ENCODE measurements at regions of chr11 and their contacts with region 1.

Region 1: DNA sequence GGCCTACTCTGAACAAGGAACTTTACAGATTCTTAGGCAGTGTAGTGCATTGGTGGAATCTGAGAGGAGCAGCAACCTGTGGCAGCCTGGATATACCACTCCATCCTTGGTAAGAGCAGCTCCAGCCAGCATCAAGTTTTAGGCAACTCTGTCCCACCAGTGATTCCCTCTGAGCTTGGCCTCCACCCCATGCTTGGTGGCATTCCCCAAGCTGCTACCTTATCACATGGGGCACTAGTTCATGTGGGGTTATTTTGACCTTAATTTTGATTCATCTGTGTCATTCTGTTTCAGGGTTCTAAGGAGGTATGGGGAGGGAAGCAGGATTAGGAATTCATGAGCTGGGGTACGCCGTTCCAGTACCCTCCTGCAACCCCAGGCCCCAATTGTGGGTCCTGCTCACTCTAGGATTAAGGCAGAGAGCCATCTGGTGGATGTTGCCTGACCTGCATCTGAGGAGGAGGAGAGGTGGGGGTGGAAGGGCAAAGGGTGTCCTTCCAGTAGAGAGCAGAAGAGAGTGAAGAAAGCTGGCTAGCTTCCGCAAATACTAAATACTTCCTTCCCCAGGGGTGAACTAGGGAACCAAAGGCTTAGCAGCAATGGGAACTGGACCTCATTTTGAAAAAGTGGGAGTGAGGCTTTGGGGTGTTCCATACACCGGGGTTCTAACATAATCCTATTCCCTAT is 10.5 kb downstream of the LRRC51 start:
- DNase-seq: peak; percentile 82
- H3K4me3 Mint-ChIP-seq: no peak overlapping the region
- H3K27ac Mint-ChIP-seq: peak overlapping the region; percentile 38
- H3K4me1 Mint-ChIP-seq: peaks cover 7% of the 10 kb centered on the region
- H3K27me3 Mint-ChIP-seq: no peaks in the 10 kb centered on the region

Region 2: GRCh38 chr11:71928737-71929452 is 162.3 kb before region 1 on chr11 and contains the start of gene RNF121:
- CTCF ChIA-PET with region 1: no interaction called
- DNase-seq: peak; percentile 99
- H3K4me3 Mint-ChIP-seq: peak within 1 kb of the TSS; percentile 88
- H3K27ac Mint-ChIP-seq: peak within 1 kb of the TSS; percentile 100
- H3K4me1 Mint-ChIP-seq: peaks cover 45% of the 10 kb centered on the region
- H3K27me3 Mint-ChIP-seq: peaks cover 4% of the 10 kb centered on the region

Region 3: GRCh38 chr11:72030472-72031045 is 60.6 kb before region 1 on chr11:
- CTCF ChIA-PET with region 1: interaction called, 156 read pairs
- DNase-seq: no peak
- H3K4me3 Mint-ChIP-seq: no peak overlapping the region
- H3K27ac Mint-ChIP-seq: no peak overlapping the region
- H3K4me1 Mint-ChIP-seq: peaks cover 20% of the 10 kb centered on the region
- H3K27me3 Mint-ChIP-seq: no peaks in the 10 kb centered on the region

Region 4: DNA sequence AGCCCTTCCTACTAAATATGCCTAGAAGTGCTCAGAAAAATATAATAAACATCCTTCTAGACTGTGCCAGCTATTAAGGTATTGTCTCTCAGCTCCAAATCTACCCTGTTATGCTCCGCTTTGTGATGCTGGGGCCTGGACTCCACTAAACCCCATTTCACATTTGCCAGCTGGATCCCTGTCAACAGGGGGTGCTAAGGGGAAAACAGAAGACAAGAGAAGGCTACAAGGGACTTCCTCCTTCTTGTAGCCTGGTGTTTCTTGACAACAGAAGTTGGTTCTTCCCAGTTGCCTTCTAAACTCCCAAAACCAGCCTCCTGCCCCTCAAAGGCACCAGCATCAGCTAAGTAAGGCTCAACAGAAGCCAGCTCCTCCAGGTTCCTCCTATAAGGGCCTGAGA is 16.0 kb before region 1 on chr11:
- CTCF ChIA-PET with region 1: interaction called, 11 read pairs
- DNase-seq: peak; percentile 33
- H3K4me3 Mint-ChIP-seq: no peak overlapping the region
- H3K27ac Mint-ChIP-seq: peak overlapping the region; percentile 54
- H3K4me1 Mint-ChIP-seq: peaks cover 69% of the 10 kb centered on the region
- H3K27me3 Mint-ChIP-seq: no peaks in the 10 kb centered on the region

Region 5: GRCh38 chr11:72102946-72103753 is 12.0 kb after region 1 on chr11 and contains the start of gene LAMTOR1:
- CTCF ChIA-PET with region 1: interaction called, 29 read pairs
- DNase-seq: peak; percentile 99
- H3K4me3 Mint-ChIP-seq: peak within 1 kb of the TSS; percentile 86
- H3K27ac Mint-ChIP-seq: peak within 1 kb of the TSS; percentile 88
- H3K4me1 Mint-ChIP-seq: peaks cover 41% of the 10 kb centered on the region
- H3K27me3 Mint-ChIP-seq: no peaks in the 10 kb centered on the region

Region 6: DNA sequence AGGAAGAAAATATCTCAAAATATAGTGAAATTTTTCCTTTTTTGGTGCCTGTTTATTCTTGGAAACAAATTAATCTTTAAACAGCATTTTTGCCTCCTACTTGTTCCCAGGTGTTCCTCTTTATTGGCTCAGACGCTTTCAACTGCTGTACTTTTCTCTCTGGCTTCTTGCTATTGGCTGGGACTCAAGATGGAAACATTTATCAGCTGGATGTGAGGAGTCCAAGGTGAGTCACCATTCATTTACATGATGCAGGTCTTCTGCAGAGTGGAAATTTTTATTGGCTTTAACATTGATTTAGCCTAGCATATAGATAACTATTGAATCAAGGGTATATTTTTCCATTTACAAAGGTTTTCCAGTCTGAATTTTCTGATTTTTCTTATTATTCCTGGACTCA is 1825.3 kb after region 1 on chr11:
- CTCF ChIA-PET with region 1: no interaction called
- DNase-seq: no peak
- H3K4me3 Mint-ChIP-seq: no peak overlapping the region
- H3K27ac Mint-ChIP-seq: no peak overlapping the region
- H3K4me1 Mint-ChIP-seq: no peaks in the 10 kb centered on the region
- H3K27me3 Mint-ChIP-seq: no peaks in the 10 kb centered on the region